ENCODE measurements at regions of chr13 and their contacts with region 1.

Region 1: GRCh38 chr13:44969551-44970484 is 19.5 kb downstream of the NUFIP1 start:
- DNase-seq: peak in 1 of 10 donors; percentile 12
- H3K4me3 ChIP-seq: peak overlapping the region in 1 of 59 donors; percentile 4
- H3K27ac ChIP-seq: peak overlapping the region in 37 of 59 donors; percentile 3 to 83 (median 42)
- H3K27me3 ChIP-seq: no peaks in the 10 kb centered on the region
- CTCF ChIP-seq: peak; percentile 71 to 97 (median 92)

Region 2: GRCh38 chr13:43905435-43906031 is 1064.3 kb before region 1 on chr13:
- intact Hi-C with region 1: loop called (anchors 5 to 10 kb)
- DNase-seq: peak in 2 of 10 donors; percentile 35 to 51
- H3K4me3 ChIP-seq: no peak overlapping the region
- H3K27ac ChIP-seq: no peak overlapping the region
- H3K27me3 ChIP-seq: no peaks in the 10 kb centered on the region
- CTCF ChIP-seq: peak; percentile 81 to 98 (median 92)

Region 3: GRCh38 chr13:44577236-44578066 is 392.4 kb before region 1 on chr13:
- intact Hi-C with region 1: loop called in 1 of 2 experiments (anchors 5 kb)
- DNase-seq: peak; percentile 85 to 97 (median 92)
- H3K4me3 ChIP-seq: peak overlapping the region; percentile 55 to 100 (median 89)
- H3K27ac ChIP-seq: peak overlapping the region; percentile 70 to 99 (median 97)
- H3K27me3 ChIP-seq: no peaks in the 10 kb centered on the region
- CTCF ChIP-seq: peak in 13 of 56 donors; percentile 6 to 38 (median 13)

Region 4: GRCh38 chr13:44876782-44877324 is 93.0 kb before region 1 on chr13:
- intact Hi-C with region 1: no loop called
- DNase-seq: no peak
- H3K4me3 ChIP-seq: no peak overlapping the region
- H3K27ac ChIP-seq: no peak overlapping the region
- H3K27me3 ChIP-seq: peaks cover 0 to 3% (median 0%) of the 10 kb centered on the region in 45 donors
- CTCF ChIP-seq: peak in 3 of 56 donors; percentile 7 to 15 (median 10)

Region 5: DNA sequence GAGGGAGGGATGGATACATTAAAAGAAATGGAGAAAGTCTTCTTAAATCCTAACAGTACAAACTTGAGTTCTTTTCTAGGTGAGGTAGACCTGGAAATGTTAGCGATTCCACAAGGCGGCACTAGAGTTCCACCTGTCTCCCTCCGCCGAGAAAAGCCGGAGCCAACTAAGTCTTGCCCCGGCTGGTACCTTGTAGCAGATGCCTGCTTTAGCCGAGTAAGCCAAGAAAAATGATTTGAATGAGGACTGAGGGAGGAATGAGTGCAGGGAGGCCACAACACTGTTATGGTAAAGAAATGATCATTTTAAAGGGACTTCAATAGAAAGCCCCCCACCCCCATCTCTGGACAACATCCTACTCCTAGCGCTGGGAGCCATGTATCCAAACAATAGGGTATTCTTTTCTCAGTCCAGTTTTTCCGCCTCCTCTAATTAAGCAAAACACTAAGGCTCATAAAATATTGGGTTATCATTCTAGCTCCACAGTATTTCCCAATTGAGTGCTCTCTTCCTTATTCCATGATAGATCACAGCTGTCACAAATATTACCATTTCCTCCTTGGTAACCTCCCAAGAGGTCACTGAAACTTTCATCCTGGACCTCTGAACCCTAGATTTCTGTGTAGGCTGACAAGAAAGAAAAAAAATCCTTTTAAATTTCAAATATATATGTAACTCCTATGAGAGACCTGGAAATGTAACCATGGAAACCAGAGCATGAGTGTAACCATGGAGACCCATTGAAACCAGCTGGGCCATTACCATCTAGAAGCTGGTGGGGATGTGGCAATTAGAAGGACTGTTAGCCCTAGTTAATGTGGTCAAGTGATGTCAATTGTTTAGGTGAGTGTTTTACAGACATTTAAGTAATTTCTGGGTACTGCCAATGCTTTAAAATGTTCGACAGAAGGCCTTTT is 77.8 kb after region 1 on chr13:
- intact Hi-C with region 1: loop called in 1 of 2 experiments (anchors 5 kb)
- DNase-seq: peak; percentile 59 to 87 (median 84)
- H3K4me3 ChIP-seq: peak overlapping the region; percentile 37 to 77 (median 59)
- H3K27ac ChIP-seq: peak overlapping the region in 58 of 59 donors; percentile 32 to 97 (median 84)
- H3K27me3 ChIP-seq: no peaks in the 10 kb centered on the region
- CTCF ChIP-seq: peak; percentile 80 to 97 (median 89)

Region 6: GRCh38 chr13:45178349-45179162 is 208.7 kb after region 1 on chr13:
- intact Hi-C with region 1: no loop called
- DNase-seq: no peak
- H3K4me3 ChIP-seq: no peak overlapping the region
- H3K27ac ChIP-seq: no peak overlapping the region
- H3K27me3 ChIP-seq: no peaks in the 10 kb centered on the region
- CTCF ChIP-seq: no peak

Region 7: GRCh38 chr13:45310341-45311125 is 340.7 kb after region 1 on chr13:
- intact Hi-C with region 1: loop called (anchors 2 to 5 kb)
- DNase-seq: no peak
- H3K4me3 ChIP-seq: peak overlapping the region; percentile 32 to 85 (median 65)
- H3K27ac ChIP-seq: peak overlapping the region in 43 of 59 donors; percentile 2 to 86 (median 57)
- H3K27me3 ChIP-seq: no peaks in the 10 kb centered on the region
- CTCF ChIP-seq: no peak

Measured in dorsolateral prefrontal cortex (tissue), 120 donors.